Left ventricle myocardium inferior (tissue), 1 donor: ENCODE measurements at regions of chr9 and their contacts with region 1.

Region 1: GRCh38 chr9:98502360-98503325 is 206.1 kb downstream of the GABBR2 start:
- DNase-seq: peak; percentile 26
- H3K4me3 ChIP-seq: no peak overlapping the region
- H3K27ac ChIP-seq: peak overlapping the region; percentile 74
- H3K4me1 ChIP-seq: peaks cover 33% of the 10 kb centered on the region
- H3K27me3 ChIP-seq: peaks cover 4% of the 10 kb centered on the region
- CTCF ChIP-seq: no peak

Region 2: GRCh38 chr9:98010445-98010844 is 492.2 kb before region 1 on chr9:
- intact Hi-C with region 1: no loop called
- DNase-seq: no peak
- H3K4me3 ChIP-seq: no peak overlapping the region
- H3K27ac ChIP-seq: peak overlapping the region; percentile 66
- H3K4me1 ChIP-seq: peaks cover 39% of the 10 kb centered on the region
- H3K27me3 ChIP-seq: no peaks in the 10 kb centered on the region
- CTCF ChIP-seq: no peak

Region 3: DNA sequence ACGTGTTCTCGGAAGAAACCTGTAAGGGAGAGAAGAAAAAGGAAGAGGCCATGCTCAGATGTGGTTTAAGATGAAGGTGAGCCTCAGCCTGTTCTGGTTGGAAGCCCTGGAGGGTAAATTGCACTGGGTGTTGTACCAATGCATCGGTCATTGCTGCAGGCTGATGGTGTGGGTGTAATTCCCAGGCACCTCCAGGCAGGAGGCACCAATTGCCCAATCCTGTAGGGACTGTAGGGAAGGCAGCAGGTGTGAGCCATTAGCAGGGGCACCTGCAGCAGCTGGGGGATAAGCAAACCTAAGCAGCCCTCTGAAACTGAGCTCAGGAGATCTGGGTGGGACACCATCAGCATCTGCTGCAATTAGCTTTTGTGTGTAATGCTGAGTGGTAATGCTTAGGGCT is 57.1 kb before region 1 on chr9:
- intact Hi-C with region 1: loop called (anchors 10 kb)
- DNase-seq: no peak
- H3K4me3 ChIP-seq: no peak overlapping the region
- H3K27ac ChIP-seq: no peak overlapping the region
- H3K4me1 ChIP-seq: no peaks in the 10 kb centered on the region
- H3K27me3 ChIP-seq: peaks cover 33% of the 10 kb centered on the region
- CTCF ChIP-seq: no peak